Sigmoid colon (tissue), 7 donors: ENCODE measurements at regions of chr2 and their contacts with region 1.

Region 1: DNA sequence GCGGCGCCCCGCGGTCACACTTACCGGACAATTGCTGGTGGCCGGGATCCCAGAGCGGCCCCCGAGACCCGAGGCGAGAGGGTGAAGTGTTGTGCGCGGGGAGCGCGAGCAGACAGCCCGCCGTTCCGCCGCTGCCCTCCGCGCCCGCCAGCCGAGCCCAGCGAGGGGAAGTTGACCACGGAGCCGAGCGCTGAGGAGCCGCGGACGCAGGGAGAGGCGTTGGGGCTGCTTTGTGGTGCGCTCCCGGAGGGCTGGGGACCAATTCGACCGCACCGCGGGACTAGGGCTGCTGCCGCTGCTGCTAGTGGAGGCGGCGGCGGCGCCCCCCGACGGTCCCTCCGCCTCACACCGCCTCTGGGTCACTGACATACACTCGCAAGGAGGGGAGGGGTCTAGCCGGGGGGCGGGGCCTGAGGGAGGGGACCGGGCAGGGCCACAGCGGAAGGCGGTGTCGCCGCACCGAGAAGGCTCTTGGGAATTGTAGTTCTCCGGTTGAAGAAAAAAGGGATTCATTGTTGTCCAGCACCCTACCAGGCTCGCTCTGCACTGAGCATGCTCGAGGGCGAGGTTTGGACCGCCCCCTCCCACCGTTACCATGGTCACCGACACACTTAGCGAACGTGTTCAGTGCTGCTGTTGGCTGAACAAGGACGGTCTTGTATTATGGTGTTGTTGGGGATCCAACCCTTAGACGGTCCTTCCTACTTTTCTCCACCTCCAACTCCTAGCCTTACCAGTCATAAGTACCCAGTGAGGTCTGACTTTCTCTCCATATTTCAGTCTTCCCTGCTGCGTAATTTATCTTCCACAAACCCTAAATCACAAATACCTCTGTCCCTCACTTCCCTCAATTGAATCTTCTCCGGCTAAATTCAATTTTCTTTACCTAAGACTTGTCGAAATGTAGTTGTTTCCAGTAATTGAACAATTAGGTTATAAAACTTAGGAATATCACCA is at the start of gene PELI1:
- DNase-seq: peak; percentile 98
- H3K4me3 ChIP-seq: peak within 1 kb of the TSS; percentile 78 to 99 (median 92)
- H3K27ac ChIP-seq: peak within 1 kb of the TSS; percentile 97 to 99 (median 98)
- H3K4me1 ChIP-seq: peaks cover 0 to 30% (median 26%) of the 10 kb centered on the region in 4 donors
- H3K27me3 ChIP-seq: no peaks in the 10 kb centered on the region
- CTCF ChIP-seq: peak in 1 of 4 experiments; percentile 7
- EP300 ChIP-seq: peak in 1 of 4 donors; percentile 13
- POLR2A ChIP-seq: peak; percentile 96 to 97
- total RNA-seq, gene PELI1: 22.0 to 30.8 (median 24.9) TPM

Region 2: GRCh38 chr2:64018923-64019718 is 125.2 kb before region 1 on chr2 and contains the start of gene VPS54:
- intact Hi-C with region 1: loop called (anchors 5 kb)
- DNase-seq: peak; percentile 82
- H3K4me3 ChIP-seq: peak within 1 kb of the TSS; percentile 75 to 97 (median 82)
- H3K27ac ChIP-seq: peak within 1 kb of the TSS; percentile 96 to 99 (median 97)
- H3K4me1 ChIP-seq: peaks cover 0 to 48% (median 39%) of the 10 kb centered on the region in 4 donors
- H3K27me3 ChIP-seq: no peaks in the 10 kb centered on the region
- CTCF ChIP-seq: peak in 1 of 4 experiments; percentile 23
- EP300 ChIP-seq: no peak
- POLR2A ChIP-seq: peak; percentile 24 to 44
- total RNA-seq, gene VPS54: 24.9 to 27.5 (median 27.2) TPM

Region 3: GRCh38 chr2:64052468-64053241 is 91.7 kb before region 1 on chr2:
- intact Hi-C with region 1: loop called (anchors 5 kb)
- DNase-seq: no peak
- H3K4me3 ChIP-seq: no peak overlapping the region
- H3K27ac ChIP-seq: peak overlapping the region in 1 of 4 donors; percentile 14
- H3K4me1 ChIP-seq: no peaks in the 10 kb centered on the region
- H3K27me3 ChIP-seq: no peaks in the 10 kb centered on the region
- CTCF ChIP-seq: no peak
- EP300 ChIP-seq: no peak
- POLR2A ChIP-seq: no peak

Region 4: GRCh38 chr2:64202206-64202845 is 58.0 kb after region 1 on chr2:
- intact Hi-C with region 1: loop called (anchors 1 kb)
- DNase-seq: no peak
- H3K4me3 ChIP-seq: no peak overlapping the region
- H3K27ac ChIP-seq: peak overlapping the region; percentile 84 to 91 (median 87)
- H3K4me1 ChIP-seq: peaks cover 0 to 41% (median 36%) of the 10 kb centered on the region in 4 donors
- H3K27me3 ChIP-seq: no peaks in the 10 kb centered on the region
- CTCF ChIP-seq: no peak
- EP300 ChIP-seq: peak in 3 of 4 donors; percentile 74 to 95 (median 80)
- POLR2A ChIP-seq: no peak

Region 5: GRCh38 chr2:64228126-64228678 is 83.9 kb after region 1 on chr2:
- intact Hi-C with region 1: loop called (anchors 2 kb)
- DNase-seq: peak; percentile 92
- H3K4me3 ChIP-seq: peak overlapping the region; percentile 15 to 53 (median 45)
- H3K27ac ChIP-seq: peak overlapping the region; percentile 73 to 82 (median 79)
- H3K4me1 ChIP-seq: peaks cover 0 to 42% (median 25%) of the 10 kb centered on the region in 4 donors
- H3K27me3 ChIP-seq: no peaks in the 10 kb centered on the region
- CTCF ChIP-seq: no peak
- EP300 ChIP-seq: no peak
- POLR2A ChIP-seq: no peak

Region 6: GRCh38 chr2:64273524-64274398 is 129.4 kb after region 1 on chr2:
- intact Hi-C with region 1: loop called (anchors 5 kb)
- DNase-seq: peak; percentile 83
- H3K4me3 ChIP-seq: peak overlapping the region in 2 of 4 donors; percentile 5 to 18
- H3K27ac ChIP-seq: peak overlapping the region; percentile 66 to 82 (median 75)
- H3K4me1 ChIP-seq: peaks cover 0 to 36% (median 27%) of the 10 kb centered on the region in 4 donors
- H3K27me3 ChIP-seq: no peaks in the 10 kb centered on the region
- CTCF ChIP-seq: no peak
- EP300 ChIP-seq: no peak
- POLR2A ChIP-seq: no peak

Region 7: DNA sequence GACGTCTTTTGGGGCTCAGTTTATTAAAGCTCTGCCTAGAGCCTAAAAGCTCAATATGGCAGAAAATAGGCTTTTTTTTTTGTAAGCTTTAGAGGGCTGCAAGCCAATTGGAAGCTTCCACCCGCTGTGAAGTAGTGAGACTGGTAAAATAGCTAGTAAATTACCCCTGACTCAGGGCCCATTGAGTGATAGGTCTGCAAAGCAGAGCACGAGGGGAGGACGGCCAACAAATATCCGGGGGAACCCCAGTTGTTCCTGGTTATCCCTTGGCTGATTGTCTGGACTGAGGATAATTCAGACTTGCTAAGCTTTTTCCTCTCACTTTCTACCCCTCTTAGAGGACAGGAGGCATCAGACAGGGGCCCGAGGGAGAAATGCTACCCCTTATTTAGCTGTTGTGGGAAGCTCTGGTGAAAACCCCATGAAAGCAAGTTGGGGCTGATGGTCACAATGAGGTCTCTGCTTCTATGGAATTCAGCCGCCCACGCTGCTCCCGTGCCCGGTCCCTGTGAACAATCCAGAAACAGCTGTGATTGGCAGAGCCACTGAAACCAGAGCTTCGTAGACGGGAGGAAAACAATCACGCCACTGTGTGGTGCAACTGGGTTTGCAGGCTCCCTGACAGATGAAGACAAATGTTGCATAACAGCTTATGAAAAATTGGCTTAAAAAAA is 167.8 kb after region 1 on chr2:
- intact Hi-C with region 1: loop called (anchors 5 kb)
- DNase-seq: peak; percentile 88
- H3K4me3 ChIP-seq: peak overlapping the region in 1 of 4 donors; percentile 6
- H3K27ac ChIP-seq: peak overlapping the region in 3 of 4 donors; percentile 53 to 62 (median 59)
- H3K4me1 ChIP-seq: peaks cover 0 to 21% (median 18%) of the 10 kb centered on the region in 4 donors
- H3K27me3 ChIP-seq: no peaks in the 10 kb centered on the region
- CTCF ChIP-seq: peak in 3 of 4 experiments; percentile 49 to 50 (median 50)
- EP300 ChIP-seq: no peak
- POLR2A ChIP-seq: no peak